ENCODE measurements at regions of chr13 and their contacts with region 1.

Region 1: DNA sequence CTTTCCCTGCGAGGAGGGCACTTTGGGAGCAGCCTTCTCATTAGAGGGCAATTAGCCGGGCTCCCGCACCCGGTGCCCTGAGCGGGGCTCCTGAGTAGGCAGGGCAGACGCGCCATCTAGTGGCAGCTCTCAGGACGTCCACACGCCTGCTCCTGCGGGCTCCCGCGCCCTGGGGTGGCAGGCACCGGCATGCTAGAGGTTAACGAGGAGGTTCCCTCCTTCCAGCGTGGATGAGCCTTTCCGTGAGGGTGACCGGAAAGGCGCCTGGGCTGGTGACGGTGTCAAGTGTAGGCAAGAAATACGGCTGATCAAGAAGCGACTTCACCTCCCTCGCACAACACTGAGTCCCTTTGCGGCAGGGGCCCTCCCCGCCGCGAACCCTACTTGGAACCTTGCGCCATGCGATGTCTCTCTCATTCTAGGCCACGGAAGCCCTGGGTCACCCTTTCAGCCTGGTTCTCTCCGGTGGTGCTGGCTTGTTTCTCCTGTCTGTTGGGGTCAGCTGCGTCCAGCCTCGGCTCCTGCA is 67.7 kb downstream of the ALOX5AP start:
- DNase-seq: peak; percentile 83
- H3K4me3 ChIP-seq: peak overlapping the region; percentile 15 to 30
- H3K27ac ChIP-seq: peak overlapping the region; percentile 45 to 57
- H3K4me1 ChIP-seq: no peaks in the 10 kb centered on the region
- H3K27me3 ChIP-seq: no peaks in the 10 kb centered on the region
- CTCF ChIP-seq: peak; percentile 86 to 96 (median 92)
- POLR2A ChIP-seq: no peak

Region 2: GRCh38 chr13:30132623-30133553 is 670.1 kb before region 1 on chr13:
- intact Hi-C with region 1: loop called (anchors 5 kb)
- DNase-seq: peak; percentile 97
- H3K4me3 ChIP-seq: no peak overlapping the region
- H3K27ac ChIP-seq: peak overlapping the region in 1 of 2 donors; percentile 30
- H3K4me1 ChIP-seq: no peaks in the 10 kb centered on the region
- H3K27me3 ChIP-seq: no peaks in the 10 kb centered on the region
- CTCF ChIP-seq: peak; percentile 81 to 96 (median 95)
- POLR2A ChIP-seq: no peak

Region 3: DNA sequence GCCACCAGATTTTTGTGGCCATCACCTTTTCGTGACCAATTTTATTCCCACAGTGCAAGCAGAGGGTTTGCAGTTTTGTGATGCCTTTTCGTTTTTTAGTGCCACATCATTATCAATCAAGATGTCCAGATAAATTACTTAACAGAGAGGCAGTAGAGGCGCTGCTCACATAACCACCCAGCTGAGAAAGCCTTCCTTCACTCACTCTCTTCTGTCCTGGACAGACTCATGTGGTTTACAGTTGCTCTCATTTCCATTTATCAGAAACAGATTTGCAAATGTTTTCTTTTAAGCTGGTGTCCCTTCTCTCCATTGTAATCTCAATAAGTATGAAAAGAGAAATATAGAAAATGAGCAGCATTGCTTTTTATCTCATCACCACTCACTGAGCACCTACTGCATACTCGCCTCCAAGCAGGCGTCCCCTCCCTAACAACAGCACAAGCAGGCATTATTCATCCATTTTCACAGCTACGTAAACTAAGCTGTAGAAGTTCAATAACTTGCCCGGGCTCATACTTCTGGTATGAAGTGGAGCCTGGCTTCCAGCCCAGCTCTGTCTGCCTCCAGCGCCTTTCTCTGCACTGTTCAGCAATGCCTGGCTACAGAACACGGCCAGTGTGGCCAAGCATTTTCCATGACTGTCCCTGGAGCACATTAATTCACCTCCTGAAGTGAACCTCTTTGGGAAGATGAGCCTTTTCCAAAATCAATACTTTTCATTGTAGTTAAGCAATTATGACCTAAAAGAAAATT is 461.0 kb before region 1 on chr13:
- intact Hi-C with region 1: loop called (anchors 5 kb)
- DNase-seq: peak; percentile 91
- H3K4me3 ChIP-seq: no peak overlapping the region
- H3K27ac ChIP-seq: peak overlapping the region; percentile 30 to 39
- H3K4me1 ChIP-seq: peaks cover 12% of the 10 kb centered on the region
- H3K27me3 ChIP-seq: no peaks in the 10 kb centered on the region
- CTCF ChIP-seq: no peak
- POLR2A ChIP-seq: no peak

Region 4: DNA sequence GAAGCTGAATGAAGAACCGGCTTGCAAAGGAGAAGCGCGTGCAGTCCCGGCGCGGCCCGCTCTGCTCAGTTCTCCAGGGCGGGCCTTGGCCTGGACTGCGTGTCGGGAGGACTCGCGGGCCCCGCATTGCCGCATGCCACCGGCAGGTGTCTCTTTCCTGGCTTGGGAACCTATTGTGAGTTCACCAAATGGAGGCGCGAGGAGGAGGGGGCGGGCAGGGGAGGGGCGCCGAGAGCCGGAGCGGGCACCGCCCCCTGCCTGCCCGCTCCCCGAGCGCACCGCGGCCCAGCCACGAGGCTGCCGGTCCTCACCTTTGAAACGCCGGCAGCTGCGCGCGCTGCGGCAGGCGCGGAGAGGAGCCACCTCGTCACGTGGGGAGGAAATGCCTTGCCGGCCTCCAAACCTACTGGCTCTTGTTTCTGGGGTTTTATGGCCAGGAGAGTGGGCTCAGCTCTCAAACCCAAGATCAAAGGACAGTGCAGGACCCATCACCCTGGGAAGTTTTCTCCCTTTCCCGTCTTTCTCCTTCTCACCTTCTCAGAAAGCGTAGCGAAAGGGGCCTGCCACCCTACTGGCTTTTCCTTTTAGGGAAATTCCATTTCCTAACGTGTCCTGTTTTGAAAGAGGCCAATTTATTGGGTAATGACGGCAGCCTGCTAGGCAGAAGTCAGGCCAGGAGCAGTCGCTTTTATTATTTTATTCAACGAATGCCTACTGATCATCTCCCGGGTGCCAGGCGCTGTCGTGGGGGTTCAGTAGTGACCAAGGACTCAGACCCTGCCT is 394.5 kb before region 1 on chr13:
- intact Hi-C with region 1: loop called (anchors 5 kb)
- DNase-seq: peak; percentile 94
- H3K4me3 ChIP-seq: peak overlapping the region; percentile 15 to 29
- H3K27ac ChIP-seq: peak overlapping the region; percentile 87 to 90
- H3K4me1 ChIP-seq: peaks cover 7% of the 10 kb centered on the region
- H3K27me3 ChIP-seq: no peaks in the 10 kb centered on the region
- CTCF ChIP-seq: peak; percentile 84 to 98 (median 88)
- POLR2A ChIP-seq: peak; percentile 29

Region 5: DNA sequence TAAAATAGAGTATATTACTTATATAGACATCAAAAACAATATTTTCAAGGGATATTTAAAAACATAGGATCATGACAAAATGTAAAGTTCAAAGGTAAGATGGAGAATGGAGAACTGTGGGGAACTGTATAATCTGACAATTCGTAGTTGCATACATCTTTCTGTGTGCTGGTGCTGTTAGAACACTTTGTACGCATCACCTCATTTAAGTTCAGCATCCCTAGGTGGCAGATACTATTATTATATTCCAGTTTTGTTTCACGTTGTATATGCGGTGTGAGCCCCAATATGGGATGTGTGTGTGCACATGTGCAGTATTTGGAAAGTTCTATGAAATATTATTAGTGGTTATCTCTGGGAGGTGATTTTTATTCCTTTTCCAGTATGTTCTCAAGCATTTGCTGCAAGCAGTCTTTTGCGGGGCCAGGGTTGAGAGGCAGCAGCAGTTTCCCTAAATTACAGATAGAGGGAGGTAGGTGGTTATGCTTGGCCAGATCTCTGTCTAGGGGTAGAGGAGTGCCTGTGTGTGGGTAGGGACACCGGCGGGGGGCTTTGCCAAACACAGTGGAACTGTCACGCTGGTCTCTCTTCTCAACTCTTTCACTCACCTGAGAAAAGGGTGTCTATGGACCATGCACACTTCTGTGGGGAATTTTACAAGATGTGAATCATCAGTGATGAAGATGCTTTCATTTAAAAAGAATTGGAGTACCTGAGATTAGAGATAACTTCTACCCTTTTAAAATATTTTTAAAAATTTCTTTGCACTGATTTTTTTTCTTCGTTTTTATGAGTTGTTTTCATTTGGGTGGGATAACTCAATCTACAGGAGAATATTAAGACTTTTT is 123.3 kb before region 1 on chr13:
- intact Hi-C with region 1: loop called (anchors 5 kb)
- DNase-seq: no peak
- H3K4me3 ChIP-seq: no peak overlapping the region
- H3K27ac ChIP-seq: no peak overlapping the region
- H3K4me1 ChIP-seq: no peaks in the 10 kb centered on the region
- H3K27me3 ChIP-seq: no peaks in the 10 kb centered on the region
- CTCF ChIP-seq: peak in 3 of 4 experiments; percentile 9 to 57 (median 52)
- POLR2A ChIP-seq: no peak

Region 6: DNA sequence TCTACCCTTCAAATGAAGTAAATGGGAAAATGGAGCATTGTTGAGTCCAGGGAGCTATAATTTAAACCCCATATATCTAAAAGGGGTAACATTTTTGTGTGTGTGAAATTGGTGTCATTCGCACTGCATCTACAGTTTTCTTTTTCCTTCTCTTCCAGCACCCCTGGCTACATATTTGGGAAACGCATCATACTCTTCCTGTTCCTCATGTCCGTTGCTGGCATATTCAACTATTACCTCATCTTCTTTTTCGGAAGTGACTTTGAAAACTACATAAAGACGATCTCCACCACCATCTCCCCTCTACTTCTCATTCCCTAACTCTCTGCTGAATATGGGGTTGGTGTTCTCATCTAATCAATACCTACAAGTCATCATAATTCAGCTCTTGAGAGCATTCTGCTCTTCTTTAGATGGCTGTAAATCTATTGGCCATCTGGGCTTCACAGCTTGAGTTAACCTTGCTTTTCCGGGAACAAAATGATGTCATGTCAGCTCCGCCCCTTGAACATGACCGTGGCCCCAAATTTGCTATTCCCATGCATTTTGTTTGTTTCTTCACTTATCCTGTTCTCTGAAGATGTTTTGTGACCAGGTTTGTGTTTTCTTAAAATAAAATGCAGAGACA is 39.1 kb before region 1 on chr13:
- intact Hi-C with region 1: no loop called
- DNase-seq: no peak
- H3K4me3 ChIP-seq: no peak overlapping the region
- H3K27ac ChIP-seq: no peak overlapping the region
- H3K4me1 ChIP-seq: no peaks in the 10 kb centered on the region
- H3K27me3 ChIP-seq: no peaks in the 10 kb centered on the region
- CTCF ChIP-seq: no peak
- POLR2A ChIP-seq: no peak

Region 7: DNA sequence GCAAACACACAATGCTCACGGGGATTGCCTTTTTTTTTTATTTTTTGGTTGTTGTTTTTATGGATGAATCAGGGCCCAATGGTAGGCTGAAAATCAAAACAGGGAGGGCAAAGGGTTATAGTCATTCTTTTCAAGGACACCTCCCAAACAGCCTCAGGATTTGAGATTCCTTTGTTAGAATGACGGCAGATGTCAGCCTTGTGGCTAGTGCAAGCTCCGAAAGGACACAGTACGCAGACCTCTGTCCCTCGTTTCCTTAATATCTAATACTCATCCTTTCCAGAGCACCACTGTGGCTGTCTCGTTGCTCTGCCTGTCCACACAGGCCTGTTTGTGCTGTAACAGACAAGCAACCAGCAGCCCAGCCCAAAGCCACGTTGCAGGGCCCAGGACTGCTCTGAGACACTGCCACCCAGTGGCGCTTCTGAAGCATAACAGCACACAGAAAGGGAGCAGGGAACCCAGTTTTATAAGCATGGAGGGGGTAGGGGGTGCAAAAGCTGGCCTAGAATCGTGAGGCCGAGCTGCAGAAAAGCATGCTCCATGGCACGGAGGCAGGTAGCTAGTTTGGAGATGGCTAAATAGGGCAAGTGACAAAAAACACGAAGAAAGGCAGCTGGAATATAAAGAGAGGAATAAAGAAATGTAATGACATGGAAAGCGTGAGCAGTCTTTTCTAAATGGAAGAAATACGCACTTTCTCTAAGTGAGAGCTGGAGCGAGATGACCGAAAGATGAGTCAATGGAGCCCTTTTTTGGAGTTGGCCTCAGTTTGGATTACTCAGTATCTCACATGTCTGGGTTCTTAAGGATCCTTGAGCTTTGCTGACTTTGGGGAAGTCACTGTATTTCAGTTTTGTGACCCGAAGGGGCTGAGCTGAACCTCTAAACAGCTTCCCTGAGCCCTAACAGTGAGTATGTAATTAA is 62.4 kb after region 1 on chr13:
- intact Hi-C with region 1: loop called (anchors 5 kb)
- DNase-seq: peak; percentile 81
- H3K4me3 ChIP-seq: no peak overlapping the region
- H3K27ac ChIP-seq: peak overlapping the region; percentile 66 to 75
- H3K4me1 ChIP-seq: peaks cover 2% of the 10 kb centered on the region
- H3K27me3 ChIP-seq: no peaks in the 10 kb centered on the region
- CTCF ChIP-seq: peak; percentile 63 to 94 (median 79)
- POLR2A ChIP-seq: peak; percentile 9

Region 8: GRCh38 chr13:30881191-30881651 is 78.2 kb after region 1 on chr13:
- intact Hi-C with region 1: no loop called
- DNase-seq: no peak
- H3K4me3 ChIP-seq: no peak overlapping the region
- H3K27ac ChIP-seq: no peak overlapping the region
- H3K4me1 ChIP-seq: no peaks in the 10 kb centered on the region
- H3K27me3 ChIP-seq: peaks cover 2% of the 10 kb centered on the region
- CTCF ChIP-seq: no peak
- POLR2A ChIP-seq: no peak

Region 9: DNA sequence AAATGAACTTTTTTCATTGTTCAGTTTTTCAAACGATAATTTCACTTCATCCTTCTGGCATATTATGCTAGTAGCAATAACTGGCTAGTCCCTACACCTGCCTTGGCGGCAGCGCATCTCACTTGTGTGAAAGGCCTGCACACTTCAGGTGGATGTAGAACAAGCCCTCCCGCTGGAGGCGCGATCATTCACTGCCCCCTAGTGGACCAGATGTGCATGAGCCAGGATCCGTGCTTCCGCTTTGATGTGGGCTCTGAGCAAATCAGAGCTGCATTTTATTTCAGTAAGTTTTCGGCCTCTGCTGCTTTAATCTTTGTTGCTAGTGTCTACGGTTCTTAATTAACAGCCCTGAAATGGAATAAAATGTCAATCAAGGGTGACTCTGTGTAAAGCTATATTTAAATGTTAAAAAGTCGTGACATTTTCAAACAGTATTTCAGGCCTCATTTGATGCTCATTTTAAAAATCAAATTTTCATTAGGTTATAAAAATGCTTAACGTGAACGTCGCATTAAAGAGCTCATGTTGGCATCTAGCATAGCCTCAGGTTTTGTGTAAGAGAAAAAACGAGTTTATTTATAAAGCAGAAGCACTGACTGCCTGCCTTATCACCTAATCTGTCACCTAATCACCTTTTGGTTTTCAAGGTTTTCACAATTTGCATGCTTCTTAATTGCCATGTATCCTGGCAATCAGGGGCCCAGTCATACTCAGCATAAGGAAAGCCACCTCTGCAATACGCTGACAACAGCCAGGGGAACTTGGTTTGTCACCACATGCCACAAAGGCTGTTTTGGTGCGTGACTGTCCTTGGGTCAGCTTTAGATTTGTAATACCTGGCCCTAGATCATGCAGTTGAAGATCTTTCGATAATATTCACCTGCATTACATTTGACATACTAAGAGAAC is 241.6 kb after region 1 on chr13:
- intact Hi-C with region 1: loop called (anchors 5 kb)
- DNase-seq: peak; percentile 74
- H3K4me3 ChIP-seq: no peak overlapping the region
- H3K27ac ChIP-seq: no peak overlapping the region
- H3K4me1 ChIP-seq: no peaks in the 10 kb centered on the region
- H3K27me3 ChIP-seq: no peaks in the 10 kb centered on the region
- CTCF ChIP-seq: peak; percentile 82 to 89 (median 88)
- POLR2A ChIP-seq: no peak

Measured in prostate gland (tissue), 2 donors.